Left colon (tissue), 2 donors: ENCODE measurements at regions of chr21 and their contacts with region 1.

Region 1: GRCh38 chr21:39263372-39263771 is 50.1 kb downstream of the BRWD1 start:
- DNase-seq: no peak
- ATAC-seq: no peak

Region 2: DNA sequence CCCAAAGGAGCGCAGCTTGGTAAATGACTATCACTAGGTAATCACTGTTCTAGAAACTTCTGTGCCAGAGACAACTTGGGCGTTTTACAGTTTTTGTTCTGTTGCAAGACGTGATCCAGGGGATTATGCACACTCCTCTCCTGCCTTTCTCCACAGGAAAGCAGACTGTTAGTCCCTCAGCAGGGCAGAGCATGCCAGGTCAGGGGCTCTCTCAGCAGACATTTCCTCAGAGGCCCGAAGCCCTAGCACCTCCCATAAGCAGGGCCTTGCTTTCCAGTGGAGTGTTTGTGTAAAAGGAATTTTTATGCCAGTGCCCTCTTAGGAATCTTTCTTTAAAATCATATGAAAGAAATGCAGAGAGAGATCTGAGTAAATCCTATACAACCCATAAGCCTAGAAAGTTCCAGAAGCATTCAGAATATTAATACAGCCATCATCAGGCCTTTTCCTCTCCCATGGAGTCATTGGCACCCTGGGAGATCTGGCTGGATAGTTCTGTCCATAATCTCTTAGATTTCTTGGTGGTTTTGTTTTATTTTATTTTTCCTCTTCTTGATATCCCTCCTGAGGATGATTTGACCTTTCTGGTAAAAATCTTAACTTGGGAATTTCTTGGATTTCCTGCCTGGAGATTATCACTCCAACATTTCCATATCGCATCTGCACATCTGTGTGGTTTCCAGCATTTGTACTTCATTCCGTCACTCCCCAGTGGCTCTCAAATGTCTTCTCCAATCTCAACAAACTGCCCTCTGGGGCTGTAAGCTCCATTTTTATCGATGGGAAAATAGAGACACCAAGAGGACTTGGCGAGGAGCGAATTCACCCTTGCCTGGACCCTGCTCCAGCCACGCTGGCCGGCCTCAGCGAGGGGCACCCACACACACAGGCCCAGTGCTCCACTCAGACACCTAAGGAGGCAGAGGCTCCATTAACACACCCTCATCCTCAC is 196.3 kb before region 1 on chr21:
- intact Hi-C with region 1: no loop called
- DNase-seq: no peak
- ATAC-seq: no peak

Region 3: DNA sequence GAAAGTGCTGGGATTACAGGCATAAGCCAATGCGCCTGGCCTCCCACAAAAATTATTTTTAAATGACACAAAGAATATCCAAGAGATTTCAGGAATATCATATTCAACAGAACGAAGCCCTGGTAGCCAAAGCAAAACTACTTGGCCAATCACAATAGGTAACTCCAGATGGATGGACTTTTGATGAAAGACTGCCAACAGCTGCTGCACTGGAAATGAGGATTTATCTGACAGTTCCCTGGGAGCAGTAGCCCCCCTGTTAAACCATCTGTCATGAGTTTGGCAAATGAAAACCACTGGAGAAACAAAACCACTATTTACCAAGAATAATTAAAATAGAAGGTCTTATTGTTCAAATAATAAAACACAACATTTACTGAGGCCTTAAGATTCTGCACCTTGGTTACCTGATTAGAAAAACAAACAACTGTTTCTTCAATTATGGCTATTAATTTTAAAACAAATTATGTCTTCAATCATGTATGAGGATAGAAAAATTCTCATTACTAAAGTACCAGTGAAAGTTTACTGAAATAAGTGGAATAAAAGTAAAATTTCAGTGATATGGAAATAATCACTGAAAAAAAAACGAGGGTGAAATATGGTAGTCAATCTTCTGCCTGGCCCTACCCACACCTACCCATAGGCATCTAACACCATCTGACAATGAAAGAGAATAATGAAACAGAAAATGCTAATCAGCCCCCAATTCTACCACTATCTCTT is 45.9 kb before region 1 on chr21:
- intact Hi-C with region 1: loop called in 1 of 2 experiments (anchors 10 kb)
- DNase-seq: no peak
- ATAC-seq: no peak

Region 4: DNA sequence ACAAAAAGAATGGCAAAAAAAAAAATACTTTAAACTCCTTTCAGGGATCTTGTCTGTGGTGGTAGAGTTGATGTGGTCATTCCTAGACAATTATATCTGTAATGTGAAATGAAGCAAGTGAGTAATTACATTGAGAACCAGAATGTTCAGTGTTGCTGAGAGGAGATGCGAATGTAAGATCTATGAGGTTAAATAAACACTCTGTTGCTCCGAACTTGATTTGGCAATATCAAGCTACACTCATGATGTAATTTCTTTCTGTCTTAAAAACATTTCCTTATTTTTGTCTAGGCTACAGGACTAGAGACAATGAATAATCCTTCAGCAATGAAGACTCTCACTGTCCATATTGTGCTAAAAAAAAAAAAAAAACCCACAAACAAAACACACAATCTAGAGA is 418.5 kb after region 1 on chr21:
- intact Hi-C with region 1: no loop called
- DNase-seq: no peak
- ATAC-seq: no peak